CD4-positive, alpha-beta T cell (primary cell): ENCODE measurements at regions of chr14 and their contacts with region 1.

Region 1: GRCh38 chr14:24463017-24463883 is 20.7 kb upstream of the SDR39U1 start:
- DNase-seq: no peak
- ATAC-seq: no peak
- H3K4me3 ChIP-seq: no peak overlapping the region
- H3K4me3 Mint-ChIP-seq: peak overlapping the region; percentile 3
- H3K27ac ChIP-seq: no peak overlapping the region
- H3K27ac Mint-ChIP-seq: no peak overlapping the region
- H3K4me1 ChIP-seq: peaks cover 6% of the 10 kb centered on the region
- H3K4me1 Mint-ChIP-seq: peaks cover 35% of the 10 kb centered on the region
- H3K27me3 ChIP-seq: no peaks in the 10 kb centered on the region
- H3K27me3 Mint-ChIP-seq: no peaks in the 10 kb centered on the region
- CTCF ChIP-seq: no peak

Region 2: DNA sequence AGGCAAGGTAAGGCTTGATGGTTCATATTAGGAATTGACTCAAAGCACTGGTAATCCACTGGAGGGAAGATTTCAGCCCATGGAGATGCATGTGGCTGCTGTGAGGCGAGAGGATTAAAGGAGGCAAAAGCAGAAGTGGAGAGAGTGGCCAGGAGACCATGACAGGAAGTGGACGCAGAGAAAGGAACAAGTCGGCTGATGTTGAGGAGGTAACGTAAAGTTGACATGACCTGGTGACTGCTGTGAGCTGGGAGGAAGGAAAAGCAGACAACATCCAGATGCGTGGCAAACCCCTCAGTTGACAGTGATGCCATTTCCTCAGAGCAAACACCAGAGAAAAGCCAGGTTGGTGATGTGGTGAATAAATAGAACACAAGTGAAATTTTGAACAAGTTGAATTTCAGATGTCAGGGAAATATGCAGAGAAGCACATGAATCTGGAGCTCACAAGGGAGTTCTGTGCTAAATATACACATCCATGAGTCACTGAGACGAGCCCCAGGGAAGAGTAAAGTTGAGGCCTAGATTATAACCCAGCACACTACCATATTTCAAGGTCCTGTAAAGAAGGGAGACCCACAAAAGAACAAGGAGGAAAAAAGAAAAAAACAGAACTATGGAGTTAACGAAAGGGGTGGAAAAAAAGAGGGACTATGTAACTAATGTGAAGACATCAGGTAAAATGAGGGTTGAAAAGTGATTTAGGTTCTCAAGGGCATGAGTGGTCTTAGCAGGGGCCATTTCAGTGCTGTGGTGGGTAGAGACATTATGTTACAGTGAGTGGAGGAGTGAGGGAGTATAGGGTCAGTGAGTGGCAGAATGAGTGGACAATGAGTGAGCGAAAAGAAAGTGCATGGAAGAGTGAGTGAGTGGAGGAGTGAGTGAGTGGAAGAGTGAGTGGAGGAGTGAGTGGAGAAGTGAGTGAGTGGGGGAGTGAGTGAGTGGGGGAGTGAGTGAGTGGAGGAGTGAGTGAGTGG is 232.3 kb after region 1 on chr14:
- CTCF ChIA-PET with region 1: no interaction called
- POLR2A ChIA-PET with region 1: no interaction called
- intact Hi-C with region 1: loop called in 1 of 2 experiments (anchors 10 kb)
- DNase-seq: peak in 3 of 14 experiments; percentile 52 to 67 (median 57)
- ATAC-seq: no peak
- H3K4me3 ChIP-seq: no peak overlapping the region
- H3K4me3 Mint-ChIP-seq: no peak overlapping the region
- H3K27ac ChIP-seq: peak overlapping the region in 1 of 2 donors; percentile 29
- H3K27ac Mint-ChIP-seq: no peak overlapping the region
- H3K4me1 ChIP-seq: peaks cover 50% of the 10 kb centered on the region
- H3K4me1 Mint-ChIP-seq: peaks cover 19% of the 10 kb centered on the region
- H3K27me3 ChIP-seq: no peaks in the 10 kb centered on the region
- H3K27me3 Mint-ChIP-seq: peaks cover 5% of the 10 kb centered on the region
- CTCF ChIP-seq: no peak